MCF 10A (cell line): ENCODE measurements at regions of chr4 and their contacts with region 1.

Region 1: GRCh38 chr4:124322234-124323065 is 390.1 kb downstream of the ANKRD50 start:
- DNase-seq: peak; percentile 59
- H3K4me3 Mint-ChIP-seq: no peak overlapping the region
- H3K27ac Mint-ChIP-seq: no peak overlapping the region
- H3K4me1 Mint-ChIP-seq: no peaks in the 10 kb centered on the region
- H3K27me3 Mint-ChIP-seq: no peaks in the 10 kb centered on the region
- CTCF ChIP-seq: peak; percentile 52

Region 2: DNA sequence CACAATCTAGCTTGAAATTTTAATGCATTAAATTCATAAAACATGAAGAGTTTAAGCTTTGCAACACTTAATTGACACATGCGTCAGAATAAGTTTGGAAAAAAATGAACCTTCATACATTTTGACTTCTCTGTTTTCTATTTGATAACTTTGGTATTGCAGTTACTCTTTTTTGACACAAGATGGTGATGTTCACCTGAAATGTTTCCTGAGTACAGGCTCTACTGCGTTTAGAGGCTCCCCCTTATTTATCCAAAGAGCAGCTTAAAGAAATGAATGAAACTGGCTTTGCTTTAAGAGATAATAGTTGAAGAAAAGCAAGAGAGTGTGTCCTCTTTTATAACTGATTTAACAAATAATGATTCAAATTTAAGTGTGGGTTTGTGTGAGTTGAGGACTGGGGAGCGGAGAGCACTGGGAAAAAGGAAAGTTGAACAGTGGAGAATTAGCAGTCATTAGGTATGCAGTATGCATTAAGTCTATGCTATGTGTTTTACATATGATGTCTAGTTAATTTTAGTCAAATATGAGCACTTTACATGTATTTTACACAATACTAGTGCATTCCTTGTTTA is 1219.5 kb before region 1 on chr4:
- CTCF ChIA-PET with region 1: no interaction called
- POLR2A ChIA-PET with region 1: no interaction called
- intact Hi-C with region 1: loop called (anchors 10 kb)
- DNase-seq: peak; percentile 49
- H3K4me3 Mint-ChIP-seq: no peak overlapping the region
- H3K27ac Mint-ChIP-seq: peak overlapping the region; percentile 29
- H3K4me1 Mint-ChIP-seq: peaks cover 5% of the 10 kb centered on the region
- H3K27me3 Mint-ChIP-seq: no peaks in the 10 kb centered on the region
- CTCF ChIP-seq: peak; percentile 58

Region 3: GRCh38 chr4:123390846-123391456 is 931.5 kb before region 1 on chr4:
- CTCF ChIA-PET with region 1: no interaction called
- POLR2A ChIA-PET with region 1: no interaction called
- intact Hi-C with region 1: loop called (anchors 2 kb)
- DNase-seq: peak; percentile 35
- H3K4me3 Mint-ChIP-seq: no peak overlapping the region
- H3K27ac Mint-ChIP-seq: no peak overlapping the region
- H3K4me1 Mint-ChIP-seq: peaks cover 10% of the 10 kb centered on the region
- H3K27me3 Mint-ChIP-seq: no peaks in the 10 kb centered on the region
- CTCF ChIP-seq: peak; percentile 33